ENCODE measurements at regions of chr15 and their contacts with region 1.

Region 1: DNA sequence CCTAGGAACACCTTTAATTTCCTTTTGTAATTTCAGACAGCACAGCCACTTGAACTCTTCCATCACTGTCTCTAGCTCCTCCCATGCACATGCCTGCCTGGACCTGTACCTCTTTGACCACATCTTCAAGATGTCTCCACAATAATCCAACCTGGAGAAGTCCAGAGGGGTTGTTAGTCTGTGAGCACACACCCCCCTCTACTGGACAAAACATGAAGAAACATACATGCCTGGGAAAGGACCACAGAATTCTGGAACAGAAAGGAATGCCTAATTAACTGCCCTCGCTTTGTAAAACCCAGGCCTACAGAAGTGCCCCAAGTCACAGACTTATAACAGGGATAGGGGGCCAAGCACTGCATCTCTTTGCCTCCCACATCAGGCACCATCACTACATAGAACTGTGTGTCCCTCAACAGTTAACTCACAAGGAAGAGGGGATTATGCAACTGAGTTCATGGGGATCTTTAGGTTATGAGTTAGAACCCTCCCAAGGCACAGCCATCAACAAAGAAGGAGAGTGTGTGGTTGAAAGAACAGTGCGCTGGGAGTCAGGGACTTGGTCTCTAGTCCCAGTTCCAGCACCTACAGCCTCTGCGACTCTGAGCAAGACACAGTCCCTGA is 61.7 kb downstream of the FMN1 start:
- DNase-seq: peak in 1 of 2 donors; percentile 59
- ATAC-seq: no peak
- H3K4me3 ChIP-seq: no peak overlapping the region
- H3K4me3 Mint-ChIP-seq: no peak overlapping the region
- H3K27ac ChIP-seq: no peak overlapping the region
- H3K27ac Mint-ChIP-seq: no peak overlapping the region
- H3K4me1 ChIP-seq: no peaks in the 10 kb centered on the region
- H3K4me1 Mint-ChIP-seq: peaks cover 0 to 7% of the 10 kb centered on the region in 2 donors
- H3K27me3 ChIP-seq: no peaks in the 10 kb centered on the region
- H3K27me3 Mint-ChIP-seq: peaks cover 0 to 26% of the 10 kb centered on the region in 2 donors
- CTCF ChIP-seq: peak; percentile 51

Region 2: GRCh38 chr15:32659340-32660155 is 473.3 kb before region 1 on chr15:
- intact Hi-C with region 1: loop called (anchors 5 kb)
- DNase-seq: no peak
- ATAC-seq: no peak
- H3K4me3 ChIP-seq: no peak overlapping the region
- H3K4me3 Mint-ChIP-seq: no peak overlapping the region
- H3K27ac ChIP-seq: no peak overlapping the region
- H3K27ac Mint-ChIP-seq: no peak overlapping the region
- H3K4me1 ChIP-seq: no peaks in the 10 kb centered on the region
- H3K4me1 Mint-ChIP-seq: peaks cover 17 to 22% of the 10 kb centered on the region in 2 donors
- H3K27me3 ChIP-seq: no peaks in the 10 kb centered on the region
- H3K27me3 Mint-ChIP-seq: no peaks in the 10 kb centered on the region
- CTCF ChIP-seq: no peak

Region 3: DNA sequence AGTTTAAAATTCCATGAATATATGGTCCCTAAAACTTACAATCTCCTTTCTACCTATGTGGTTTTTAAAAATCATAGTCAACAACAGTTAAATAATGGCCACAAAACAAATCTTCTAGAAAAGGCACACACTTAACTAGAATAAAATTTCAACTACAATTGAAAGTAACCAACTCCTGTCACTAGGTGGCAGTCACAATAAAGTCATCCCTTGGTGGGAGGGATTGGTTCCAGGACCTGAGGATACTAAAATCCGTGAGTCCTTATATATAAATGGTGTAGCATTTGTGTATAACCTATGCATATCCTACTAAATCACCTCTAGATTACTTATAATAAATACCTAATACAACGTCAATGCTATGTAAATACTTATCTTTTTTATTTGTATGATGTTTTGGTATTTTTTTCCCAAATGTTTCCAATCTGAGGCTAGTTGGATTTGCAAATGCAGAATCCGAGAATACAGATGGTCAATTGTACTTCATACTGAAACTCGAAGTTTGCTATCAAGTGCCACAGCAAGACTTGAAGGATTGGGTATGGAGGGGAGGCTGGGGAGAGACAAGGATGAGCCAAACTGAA is 110.9 kb before region 1 on chr15:
- intact Hi-C with region 1: loop called (anchors 5 kb)
- DNase-seq: peak in 1 of 2 donors; percentile 34
- ATAC-seq: no peak
- H3K4me3 ChIP-seq: no peak overlapping the region
- H3K4me3 Mint-ChIP-seq: no peak overlapping the region
- H3K27ac ChIP-seq: no peak overlapping the region
- H3K27ac Mint-ChIP-seq: no peak overlapping the region
- H3K4me1 ChIP-seq: no peaks in the 10 kb centered on the region
- H3K4me1 Mint-ChIP-seq: no peaks in the 10 kb centered on the region
- H3K27me3 ChIP-seq: no peaks in the 10 kb centered on the region
- H3K27me3 Mint-ChIP-seq: peaks cover 0 to 4% of the 10 kb centered on the region in 2 donors
- CTCF ChIP-seq: peak; percentile 54

Region 4: DNA sequence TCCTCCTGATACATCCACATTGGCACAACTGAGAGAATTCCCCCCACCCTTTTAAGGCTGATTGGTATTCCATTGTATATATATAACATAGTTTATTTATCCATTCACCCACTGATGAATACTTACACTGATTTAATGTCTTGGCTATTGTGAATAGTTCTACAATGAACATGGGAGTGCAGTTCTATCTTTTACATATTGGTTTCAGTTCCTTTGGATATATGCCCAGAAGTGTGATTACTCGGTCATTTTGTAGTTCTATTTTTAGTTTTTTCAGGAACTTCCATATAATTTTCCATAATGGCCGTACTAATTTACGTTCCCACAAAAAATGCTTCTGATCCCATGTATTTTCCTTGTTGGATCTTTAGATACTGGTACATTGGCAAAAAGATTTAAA is 73.7 kb before region 1 on chr15:
- intact Hi-C with region 1: no loop called
- DNase-seq: no peak
- ATAC-seq: no peak
- H3K4me3 ChIP-seq: no peak overlapping the region
- H3K4me3 Mint-ChIP-seq: no peak overlapping the region
- H3K27ac ChIP-seq: no peak overlapping the region
- H3K27ac Mint-ChIP-seq: no peak overlapping the region
- H3K4me1 ChIP-seq: no peaks in the 10 kb centered on the region
- H3K4me1 Mint-ChIP-seq: no peaks in the 10 kb centered on the region
- H3K27me3 ChIP-seq: no peaks in the 10 kb centered on the region
- H3K27me3 Mint-ChIP-seq: no peaks in the 10 kb centered on the region
- CTCF ChIP-seq: no peak

Measured in natural killer cell (primary cell).